Activated B cell treated with CpG ODN at 0.5 μM for 24 hours (primary cell): ENCODE measurements at regions of chr13 and their contacts with region 1.

Region 1: GRCh38 chr13:99995589-99996380 is 14.2 kb downstream of the ZIC2 start:
- DNase-seq: no peak
- ATAC-seq: no peak
- H3K4me3 Mint-ChIP-seq: no peak overlapping the region
- H3K27ac Mint-ChIP-seq: no peak overlapping the region
- H3K4me1 Mint-ChIP-seq: peaks cover under 1% of the 10 kb centered on the region
- H3K27me3 Mint-ChIP-seq: peaks cover 68% of the 10 kb centered on the region
- CTCF ChIP-seq: no peak

Region 2: GRCh38 chr13:99959538-99960230 is 36.1 kb before region 1 on chr13:
- CTCF ChIA-PET with region 1: no interaction called
- POLR2A ChIA-PET with region 1: no interaction called
- intact Hi-C with region 1: loop called (anchors 2 kb)
- DNase-seq: no peak
- ATAC-seq: no peak
- H3K4me3 Mint-ChIP-seq: peak overlapping the region; percentile 41
- H3K27ac Mint-ChIP-seq: no peak overlapping the region
- H3K4me1 Mint-ChIP-seq: peaks cover 20% of the 10 kb centered on the region
- H3K27me3 Mint-ChIP-seq: peaks cover 68% of the 10 kb centered on the region
- CTCF ChIP-seq: no peak

Region 3: GRCh38 chr13:99980201-99980823 is 15.5 kb before region 1 on chr13:
- CTCF ChIA-PET with region 1: no interaction called
- POLR2A ChIA-PET with region 1: interaction called, 3 read pairs
- intact Hi-C with region 1: loop called (anchors 2 kb)
- DNase-seq: no peak
- ATAC-seq: peak; percentile 75
- H3K4me3 Mint-ChIP-seq: no peak overlapping the region
- H3K27ac Mint-ChIP-seq: no peak overlapping the region
- H3K4me1 Mint-ChIP-seq: peaks cover 2% of the 10 kb centered on the region
- H3K27me3 Mint-ChIP-seq: peaks cover 54% of the 10 kb centered on the region
- CTCF ChIP-seq: no peak